Activated CD8-positive, alpha-beta T cell treated with anti-CD3 and anti-CD28 coated beads for 36 hours (primary cell): ENCODE measurements at regions of chr10 and their contacts with region 1.

Region 1: DNA sequence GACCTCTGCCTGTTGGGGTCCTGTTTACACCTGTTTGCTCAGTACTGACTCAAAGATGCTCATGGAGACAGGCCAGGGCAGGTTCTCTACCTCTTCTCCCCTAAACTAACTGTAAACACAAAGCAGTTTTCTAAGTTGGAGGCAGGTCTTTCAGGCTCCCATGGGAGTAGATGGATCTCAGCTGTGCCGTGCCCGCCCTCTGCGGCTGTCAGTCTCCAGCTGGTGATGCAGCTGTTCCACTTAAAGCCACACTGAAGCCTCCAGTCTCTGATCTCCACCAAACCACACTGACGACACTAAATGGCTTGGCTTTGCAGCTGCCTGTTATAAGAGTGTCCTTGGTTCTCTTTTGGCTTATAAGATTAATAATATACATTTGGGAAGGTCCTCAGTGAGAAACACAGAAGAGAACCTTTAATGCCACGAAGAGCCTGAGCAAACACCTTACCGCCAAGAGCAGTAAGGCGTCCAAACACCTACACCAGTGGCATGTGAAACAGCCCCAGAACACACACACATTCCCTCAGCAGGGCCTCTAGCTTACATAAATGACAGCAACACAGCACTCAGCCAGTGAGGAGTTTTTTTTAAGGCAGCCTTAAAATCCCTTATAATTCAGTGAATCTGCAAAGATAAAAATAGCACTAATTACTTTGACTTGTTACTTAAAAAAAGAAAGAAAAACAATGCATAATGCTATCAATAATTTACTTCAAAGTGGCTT is 60.4 kb upstream of the KCNIP2 start:
- DNase-seq: peak; percentile 62
- ATAC-seq: peak; percentile 84
- H3K4me3 Mint-ChIP-seq: no peak overlapping the region
- H3K27ac Mint-ChIP-seq: peak overlapping the region; percentile 47
- H3K4me1 Mint-ChIP-seq: peaks cover 25% of the 10 kb centered on the region
- H3K27me3 Mint-ChIP-seq: no peaks in the 10 kb centered on the region
- CTCF ChIP-seq: no peak

Region 2: GRCh38 chr10:101467286-101467770 is 436.7 kb before region 1 on chr10:
- CTCF ChIA-PET with region 1: no interaction called
- POLR2A ChIA-PET with region 1: no interaction called
- intact Hi-C with region 1: no loop called
- DNase-seq: peak; percentile 29
- ATAC-seq: peak; percentile 88
- H3K4me3 Mint-ChIP-seq: no peak overlapping the region
- H3K27ac Mint-ChIP-seq: no peak overlapping the region
- H3K4me1 Mint-ChIP-seq: peaks cover 8% of the 10 kb centered on the region
- H3K27me3 Mint-ChIP-seq: no peaks in the 10 kb centered on the region
- CTCF ChIP-seq: peak; percentile 75

Region 3: DNA sequence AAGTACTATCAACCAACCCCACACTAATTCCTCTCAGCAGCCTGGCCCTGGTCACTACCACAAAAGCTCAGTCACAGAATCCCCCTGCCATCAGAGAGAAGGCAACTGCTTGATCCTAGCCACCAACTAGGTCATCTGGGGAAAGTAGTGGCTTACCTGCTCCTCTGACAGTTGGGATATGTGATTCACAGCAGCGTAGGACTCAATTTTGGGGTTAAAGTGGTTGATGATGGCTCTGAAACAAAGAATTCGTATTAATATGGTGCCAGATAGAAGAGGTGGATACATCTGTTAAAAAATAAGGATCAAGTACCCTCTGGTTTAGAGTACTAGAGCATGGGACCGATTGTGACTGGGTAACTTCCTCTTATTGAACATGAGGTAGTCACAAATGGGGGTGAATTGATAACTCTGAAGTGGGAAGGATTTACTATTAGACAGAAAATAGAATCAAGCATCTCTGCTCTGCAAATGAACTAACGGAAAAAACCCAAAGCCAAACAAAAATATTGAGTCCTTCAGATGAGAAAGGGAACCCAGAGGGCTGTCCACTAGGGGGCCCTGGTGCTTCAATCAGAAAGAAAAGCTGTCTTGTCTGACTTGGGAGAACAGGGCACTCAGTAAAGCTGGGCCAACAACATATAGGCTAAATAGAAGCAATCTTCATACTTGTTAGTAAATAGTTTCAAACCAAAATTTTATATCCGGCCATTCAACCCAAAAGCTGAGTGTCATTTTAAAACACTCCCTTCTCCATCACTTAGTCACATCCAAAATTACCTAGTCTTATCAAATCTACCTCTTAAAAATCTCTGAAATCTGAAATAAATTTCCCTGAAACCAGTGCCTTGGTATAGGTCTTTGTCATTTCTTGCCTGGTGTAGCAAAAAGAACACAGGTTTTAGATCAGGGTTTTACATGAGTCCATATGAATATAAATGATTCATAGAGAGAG is 14.5 kb before region 1 on chr10:
- CTCF ChIA-PET with region 1: interaction called, 14 read pairs
- POLR2A ChIA-PET with region 1: no interaction called
- intact Hi-C with region 1: no loop called
- DNase-seq: peak; percentile 92
- ATAC-seq: peak; percentile 80
- H3K4me3 Mint-ChIP-seq: no peak overlapping the region
- H3K27ac Mint-ChIP-seq: no peak overlapping the region
- H3K4me1 Mint-ChIP-seq: no peaks in the 10 kb centered on the region
- H3K27me3 Mint-ChIP-seq: no peaks in the 10 kb centered on the region
- CTCF ChIP-seq: peak; percentile 85

Region 4: GRCh38 chr10:102195296-102195870 is 291.4 kb after region 1 on chr10:
- CTCF ChIA-PET with region 1: no interaction called
- POLR2A ChIA-PET with region 1: no interaction called
- intact Hi-C with region 1: no loop called
- DNase-seq: no peak
- ATAC-seq: no peak
- H3K4me3 Mint-ChIP-seq: no peak overlapping the region
- H3K27ac Mint-ChIP-seq: no peak overlapping the region
- H3K4me1 Mint-ChIP-seq: peaks cover 6% of the 10 kb centered on the region
- H3K27me3 Mint-ChIP-seq: no peaks in the 10 kb centered on the region
- CTCF ChIP-seq: no peak